ENCODE measurements at regions of chr5 and their contacts with region 1.

Region 1: GRCh38 chr5:160926428-160926827 is 74.4 kb upstream of the ATP10B start:
- DNase-seq: no peak
- H3K4me3 Mint-ChIP-seq: no peak overlapping the region
- H3K27ac Mint-ChIP-seq: peak overlapping the region; percentile 5
- H3K4me1 Mint-ChIP-seq: peaks cover 91% of the 10 kb centered on the region
- H3K27me3 Mint-ChIP-seq: no peaks in the 10 kb centered on the region
- CTCF ChIP-seq: no peak

Region 2: DNA sequence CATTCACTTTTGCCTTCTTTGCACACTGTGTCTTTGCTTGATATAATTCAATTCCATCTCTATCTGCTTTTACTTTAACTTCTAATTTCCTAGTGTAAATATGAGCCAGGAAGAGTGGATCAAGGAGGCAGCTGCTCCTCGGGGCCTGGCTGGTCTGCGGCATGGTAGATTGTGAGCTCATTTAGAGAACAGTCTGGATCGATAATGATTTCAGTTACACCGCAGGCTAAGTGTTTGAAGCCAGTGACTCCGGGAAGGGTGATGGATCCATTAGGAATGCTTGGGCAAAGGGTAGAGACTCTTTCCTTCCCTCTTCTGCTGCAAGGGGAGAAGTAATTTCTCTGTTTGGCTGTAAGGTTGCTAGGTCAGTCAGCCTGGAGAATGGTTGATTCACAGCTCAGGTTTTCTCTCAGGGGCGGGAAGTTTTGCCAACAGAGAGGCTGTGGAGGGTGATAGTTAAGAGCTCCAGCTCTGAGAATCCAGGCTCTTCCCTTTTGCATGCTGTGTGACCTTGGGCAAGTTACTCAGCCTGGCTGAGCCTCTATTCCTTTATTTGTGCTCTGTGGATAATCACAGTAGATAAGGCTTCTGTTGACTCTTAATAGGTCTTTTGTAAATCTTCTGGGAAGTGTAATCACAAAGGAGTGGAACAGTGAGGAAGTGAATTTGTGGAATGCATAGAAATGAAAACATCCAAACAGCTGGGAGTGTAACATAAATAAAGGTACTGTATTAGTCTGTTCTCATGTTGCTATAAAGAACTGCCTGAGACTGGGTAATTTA is 405.6 kb before region 1 on chr5:
- CTCF ChIA-PET with region 1: no interaction called
- intact Hi-C with region 1: loop called (anchors 10 kb)
- DNase-seq: peak; percentile 46
- H3K4me3 Mint-ChIP-seq: no peak overlapping the region
- H3K27ac Mint-ChIP-seq: peak overlapping the region; percentile 21
- H3K4me1 Mint-ChIP-seq: peaks cover 14% of the 10 kb centered on the region
- H3K27me3 Mint-ChIP-seq: no peaks in the 10 kb centered on the region
- CTCF ChIP-seq: no peak

Region 3: DNA sequence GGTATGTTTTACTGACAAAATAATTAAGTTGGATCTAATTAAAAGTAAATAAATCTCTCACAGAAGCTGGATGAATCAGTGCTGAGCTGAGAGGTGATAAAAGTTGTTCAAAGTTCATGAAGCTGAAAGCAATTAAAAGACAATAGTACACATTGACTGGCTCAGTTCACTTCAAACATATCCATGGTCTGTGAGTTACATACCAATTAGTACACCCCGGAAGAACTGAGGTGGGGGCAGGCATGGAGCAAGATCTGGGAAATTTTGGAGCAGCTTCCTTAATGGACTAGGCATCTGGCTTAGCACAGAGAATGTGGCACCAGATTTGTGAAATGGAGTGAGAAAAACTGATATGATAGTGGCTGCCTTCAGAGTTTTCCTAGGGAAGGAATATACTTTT is 227.1 kb before region 1 on chr5:
- CTCF ChIA-PET with region 1: no interaction called
- intact Hi-C with region 1: loop called (anchors 5 kb)
- DNase-seq: peak; percentile 57
- H3K4me3 Mint-ChIP-seq: no peak overlapping the region
- H3K27ac Mint-ChIP-seq: peak overlapping the region; percentile 45
- H3K4me1 Mint-ChIP-seq: peaks cover 44% of the 10 kb centered on the region
- H3K27me3 Mint-ChIP-seq: no peaks in the 10 kb centered on the region
- CTCF ChIP-seq: no peak

Region 4: GRCh38 chr5:160833806-160834205 is 92.6 kb before region 1 on chr5:
- CTCF ChIA-PET with region 1: no interaction called
- intact Hi-C with region 1: loop called (anchors 5 kb)
- DNase-seq: no peak
- H3K4me3 Mint-ChIP-seq: no peak overlapping the region
- H3K27ac Mint-ChIP-seq: no peak overlapping the region
- H3K4me1 Mint-ChIP-seq: peaks cover 13% of the 10 kb centered on the region
- H3K27me3 Mint-ChIP-seq: no peaks in the 10 kb centered on the region
- CTCF ChIP-seq: no peak

Region 5: GRCh38 chr5:160887777-160888176 is 38.7 kb before region 1 on chr5:
- CTCF ChIA-PET with region 1: no interaction called
- intact Hi-C with region 1: loop called (anchors 5 kb)
- DNase-seq: peak; percentile 40
- H3K4me3 Mint-ChIP-seq: no peak overlapping the region
- H3K27ac Mint-ChIP-seq: peak overlapping the region; percentile 61
- H3K4me1 Mint-ChIP-seq: peaks cover 21% of the 10 kb centered on the region
- H3K27me3 Mint-ChIP-seq: no peaks in the 10 kb centered on the region
- CTCF ChIP-seq: no peak

Region 6: DNA sequence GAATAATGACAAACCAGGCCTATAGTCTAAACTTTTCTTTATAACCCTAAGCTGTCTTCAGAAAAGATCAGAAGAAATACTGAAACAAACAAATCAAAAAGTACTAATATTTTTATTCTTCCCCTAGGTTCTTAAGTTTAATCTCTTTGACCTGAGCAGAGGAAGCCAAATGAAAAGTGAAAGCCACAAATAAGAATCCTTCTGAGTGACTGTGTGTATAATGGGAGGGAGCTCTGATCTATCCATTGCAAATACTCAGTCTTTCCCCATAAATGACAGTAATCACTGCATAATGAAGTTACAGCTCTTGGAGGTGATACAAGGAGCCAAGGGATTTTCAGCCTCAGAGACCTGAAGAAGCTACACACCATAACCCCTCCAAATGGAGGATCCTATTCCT is 52.5 kb after region 1 on chr5:
- CTCF ChIA-PET with region 1: no interaction called
- intact Hi-C with region 1: no loop called
- DNase-seq: no peak
- H3K4me3 Mint-ChIP-seq: no peak overlapping the region
- H3K27ac Mint-ChIP-seq: no peak overlapping the region
- H3K4me1 Mint-ChIP-seq: no peaks in the 10 kb centered on the region
- H3K27me3 Mint-ChIP-seq: no peaks in the 10 kb centered on the region
- CTCF ChIP-seq: no peak

Region 7: GRCh38 chr5:161009817-161010216 is 83.4 kb after region 1 on chr5:
- CTCF ChIA-PET with region 1: no interaction called
- intact Hi-C with region 1: loop called (anchors 5 kb)
- DNase-seq: no peak
- H3K4me3 Mint-ChIP-seq: no peak overlapping the region
- H3K27ac Mint-ChIP-seq: no peak overlapping the region
- H3K4me1 Mint-ChIP-seq: no peaks in the 10 kb centered on the region
- H3K27me3 Mint-ChIP-seq: no peaks in the 10 kb centered on the region
- CTCF ChIP-seq: no peak

Region 8: GRCh38 chr5:161190086-161190485 is 263.7 kb after region 1 on chr5:
- CTCF ChIA-PET with region 1: no interaction called
- intact Hi-C with region 1: loop called (anchors 5 kb)
- DNase-seq: no peak
- H3K4me3 Mint-ChIP-seq: no peak overlapping the region
- H3K27ac Mint-ChIP-seq: no peak overlapping the region
- H3K4me1 Mint-ChIP-seq: peaks cover 9% of the 10 kb centered on the region
- H3K27me3 Mint-ChIP-seq: no peaks in the 10 kb centered on the region
- CTCF ChIP-seq: no peak

Measured in Calu3 (cell line).